ENCODE measurements at regions of chr17 and their contacts with region 1.

Region 1: GRCh38 chr17:55348749-55349354 is 72.8 kb downstream of the MMD start:
- DNase-seq: peak; percentile 59 to 75 (median 69)
- H3K4me3 ChIP-seq: peak overlapping the region in 1 of 7 experiments; percentile 18
- H3K27ac ChIP-seq: no peak overlapping the region
- H3K4me1 ChIP-seq: peaks cover 2 to 16% (median 7%) of the 10 kb centered on the region in 4 experiments
- H3K27me3 ChIP-seq: no peaks in the 10 kb centered on the region

Region 2: GRCh38 chr17:55053855-55054254 is 295.0 kb before region 1 on chr17:
- CTCF ChIA-PET with region 1: interaction called, 36 read pairs
- POLR2A ChIA-PET with region 1: no interaction called
- DNase-seq: peak; percentile 29 to 51 (median 42)
- H3K4me3 ChIP-seq: no peak overlapping the region
- H3K27ac ChIP-seq: no peak overlapping the region
- H3K4me1 ChIP-seq: peaks cover 0 to 7% (median 2%) of the 10 kb centered on the region in 4 experiments
- H3K27me3 ChIP-seq: no peaks in the 10 kb centered on the region

Region 3: DNA sequence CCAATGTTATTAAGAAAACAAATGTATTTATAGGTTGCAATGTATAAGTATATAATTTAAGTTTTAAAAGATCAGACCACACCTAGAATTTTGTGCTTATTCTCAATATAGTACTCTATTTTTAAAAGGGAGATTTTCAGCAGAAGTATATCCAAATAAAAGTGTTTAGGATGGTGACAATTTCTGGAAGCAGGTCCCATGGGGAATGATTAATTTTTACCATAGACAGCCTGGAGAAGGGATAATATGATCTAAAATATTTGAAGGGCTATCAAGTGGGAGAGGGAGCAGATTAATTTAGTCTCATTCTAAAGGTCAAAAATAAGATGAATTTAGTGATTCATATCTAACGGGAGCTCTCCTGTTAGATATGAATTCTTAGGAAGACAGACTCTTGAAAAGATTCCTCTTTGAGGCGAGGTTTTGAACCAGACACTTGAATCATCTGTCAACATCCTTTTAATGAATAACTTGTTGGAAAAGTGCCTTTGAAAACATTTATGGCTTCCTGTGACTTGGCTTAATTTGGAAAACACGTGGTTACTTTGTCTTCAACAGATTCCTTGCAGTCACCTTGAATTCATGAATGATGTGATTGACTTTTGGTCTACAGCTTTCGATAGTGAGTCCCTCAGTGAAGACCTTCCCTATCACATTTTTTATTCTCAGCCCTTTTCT is 191.7 kb after region 1 on chr17:
- CTCF ChIA-PET with region 1: no interaction called
- POLR2A ChIA-PET with region 1: no interaction called
- DNase-seq: no peak
- H3K4me3 ChIP-seq: no peak overlapping the region
- H3K27ac ChIP-seq: no peak overlapping the region
- H3K4me1 ChIP-seq: no peaks in the 10 kb centered on the region
- H3K27me3 ChIP-seq: no peaks in the 10 kb centered on the region

Measured in common myeloid progenitor, CD34-positive (primary cell).